ENCODE measurements at regions of chr19 and their contacts with region 1.

Region 1: GRCh38 chr19:36876993-36877938 is 26.6 kb downstream of the ZNF345 start:
- DNase-seq: no peak
- H3K4me3 ChIP-seq: no peak overlapping the region
- H3K27ac ChIP-seq: no peak overlapping the region
- H3K4me1 ChIP-seq: no peaks in the 10 kb centered on the region
- H3K27me3 ChIP-seq: no peaks in the 10 kb centered on the region
- CTCF ChIP-seq: no peak

Region 2: DNA sequence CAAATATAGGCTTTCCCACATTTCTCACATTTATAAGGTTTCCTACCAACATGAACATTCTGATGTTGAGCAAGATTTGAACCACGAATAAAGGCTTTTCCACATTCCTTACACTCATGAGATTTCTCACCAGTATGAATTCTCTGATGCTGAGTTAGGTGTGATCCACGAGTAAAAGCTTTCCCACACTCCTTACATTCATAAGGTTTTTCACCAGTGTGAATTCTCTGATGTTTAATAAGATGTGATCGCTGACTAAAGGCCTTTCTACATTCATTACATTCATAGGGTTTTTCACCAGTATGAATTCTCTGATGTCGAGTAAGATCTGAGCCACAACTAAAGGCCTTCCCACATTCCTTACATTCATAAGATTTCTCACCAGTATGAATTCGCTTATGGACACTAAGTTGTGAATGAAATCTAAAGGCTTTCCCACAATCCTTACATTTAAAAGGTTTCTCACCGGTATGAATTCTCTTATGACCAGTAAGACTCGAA is 58.1 kb before region 1 on chr19:
- intact Hi-C with region 1: loop called (anchors 10 kb)
- DNase-seq: no peak
- H3K4me3 ChIP-seq: no peak overlapping the region
- H3K27ac ChIP-seq: no peak overlapping the region
- H3K4me1 ChIP-seq: no peaks in the 10 kb centered on the region
- H3K27me3 ChIP-seq: no peaks in the 10 kb centered on the region
- CTCF ChIP-seq: no peak

Region 3: GRCh38 chr19:36837906-36838783 is 39.1 kb before region 1 on chr19 and contains the start of gene ZNF790:
- intact Hi-C with region 1: no loop called
- DNase-seq: peak; percentile 90
- H3K4me3 ChIP-seq: peak within 1 kb of the TSS; percentile 89
- H3K27ac ChIP-seq: peak within 1 kb of the TSS; percentile 96
- H3K4me1 ChIP-seq: peaks cover 32% of the 10 kb centered on the region
- H3K27me3 ChIP-seq: no peaks in the 10 kb centered on the region
- CTCF ChIP-seq: no peak
- total RNA-seq, gene ZNF790: 7.3 TPM

Measured in left ventricle myocardium inferior (tissue), 1 donor.